Heart left ventricle (tissue), 16 donors: ENCODE measurements at regions of chr5 and their contacts with region 1.

Region 1: GRCh38 chr5:14727428-14727865 is 62.9 kb downstream of the OTULIN start:
- DNase-seq: peak; percentile 79 to 90 (median 79)
- ATAC-seq: peak; percentile 60 to 78 (median 68)
- H3K4me3 ChIP-seq: no peak overlapping the region
- H3K27ac ChIP-seq: peak overlapping the region in 6 of 12 donors; percentile 8 to 65 (median 34)
- H3K4me1 ChIP-seq: peaks cover 0 to 41% (median 25%) of the 10 kb centered on the region in 12 donors
- H3K27me3 ChIP-seq: no peaks in the 10 kb centered on the region
- CTCF ChIP-seq: peak; percentile 90 to 99 (median 96)
- POLR2A ChIP-seq: no peak

Region 2: DNA sequence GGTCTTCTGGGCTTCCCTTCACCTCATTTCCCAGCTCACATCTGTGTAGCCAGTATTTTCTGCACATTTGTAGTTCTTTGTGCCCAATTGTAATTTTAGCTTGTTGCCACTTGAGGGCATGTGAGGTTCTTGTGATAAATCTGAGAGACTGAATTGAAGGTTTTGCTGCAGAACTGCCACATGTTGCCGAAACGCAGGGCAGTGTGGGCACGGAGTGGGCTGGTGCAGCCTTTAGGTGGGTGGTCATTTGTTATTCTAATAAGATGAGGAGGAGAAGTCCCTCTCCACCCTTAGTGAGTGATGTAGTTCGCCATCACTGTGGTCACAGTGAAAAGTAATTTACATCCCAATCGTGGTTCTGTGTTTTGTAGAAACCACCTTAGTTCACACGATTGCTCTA is 41.7 kb before region 1 on chr5:
- intact Hi-C with region 1: loop called in 2 of 10 experiments (anchors 5 kb)
- DNase-seq: no peak
- ATAC-seq: peak; percentile 11 to 54 (median 43)
- H3K4me3 ChIP-seq: no peak overlapping the region
- H3K27ac ChIP-seq: peak overlapping the region in 10 of 12 donors; percentile 30 to 87 (median 75)
- H3K4me1 ChIP-seq: peaks cover 0 to 59% (median 23%) of the 10 kb centered on the region in 12 donors
- H3K27me3 ChIP-seq: no peaks in the 10 kb centered on the region
- CTCF ChIP-seq: peak; percentile 31 to 75 (median 58)
- POLR2A ChIP-seq: no peak

Region 3: GRCh38 chr5:14794583-14795230 is 67.3 kb after region 1 on chr5:
- intact Hi-C with region 1: no loop called
- DNase-seq: no peak
- ATAC-seq: peak in 2 of 4 donors; percentile 9 to 42
- H3K4me3 ChIP-seq: no peak overlapping the region
- H3K27ac ChIP-seq: no peak overlapping the region
- H3K4me1 ChIP-seq: peaks cover 0 to 35% (median 14%) of the 10 kb centered on the region in 12 donors
- H3K27me3 ChIP-seq: no peaks in the 10 kb centered on the region
- CTCF ChIP-seq: no peak
- POLR2A ChIP-seq: no peak

Region 4: GRCh38 chr5:14809369-14810155 is 82.1 kb after region 1 on chr5:
- intact Hi-C with region 1: loop called in 1 of 10 experiments (anchors 5 kb)
- DNase-seq: peak in 4 of 5 donors; percentile 57 to 78 (median 68)
- ATAC-seq: peak; percentile 25 to 80 (median 74)
- H3K4me3 ChIP-seq: peak overlapping the region in 3 of 12 donors; percentile 6 to 27 (median 12)
- H3K27ac ChIP-seq: peak overlapping the region in 11 of 12 donors; percentile 31 to 85 (median 60)
- H3K4me1 ChIP-seq: peaks cover 15 to 63% (median 42%) of the 10 kb centered on the region in 12 donors
- H3K27me3 ChIP-seq: no peaks in the 10 kb centered on the region
- CTCF ChIP-seq: no peak
- POLR2A ChIP-seq: no peak

Region 5: DNA sequence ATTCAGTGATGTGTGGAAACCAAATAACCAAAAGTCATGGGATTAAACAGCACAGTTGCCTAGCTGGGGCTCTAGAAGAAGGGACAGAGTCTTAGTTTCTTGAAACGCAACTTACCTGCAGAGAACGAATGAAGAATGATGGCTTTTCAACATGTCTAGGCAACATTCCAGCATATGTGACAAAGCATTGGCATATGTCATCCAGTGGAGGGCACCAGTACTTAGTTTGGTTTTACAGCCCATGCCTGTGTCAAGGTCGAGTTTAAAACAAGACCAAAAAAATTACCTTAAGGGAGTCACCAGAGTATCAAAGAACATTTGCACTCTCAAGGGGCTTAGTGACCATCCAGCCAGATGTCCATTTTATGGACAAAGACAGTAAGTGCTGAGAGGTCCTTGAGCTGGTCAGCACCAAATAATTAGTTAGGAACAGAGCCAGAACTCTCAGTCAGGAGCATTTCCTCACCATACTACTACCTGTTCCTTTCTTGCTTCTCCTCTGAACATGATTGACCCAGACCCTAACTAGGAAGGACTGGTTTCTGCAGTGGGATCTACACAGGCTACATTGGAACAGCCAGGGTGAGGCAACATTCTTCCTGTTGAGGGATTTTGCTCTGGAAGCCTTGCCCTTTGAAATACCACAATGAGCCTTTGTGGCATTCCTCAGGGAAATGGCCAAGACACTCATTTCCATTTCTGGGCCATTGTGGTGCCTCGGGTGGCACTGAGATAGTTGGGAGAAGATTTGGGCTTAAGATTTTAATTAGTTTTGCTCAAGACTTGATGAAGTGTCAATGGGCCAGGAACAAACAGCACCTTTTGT is 219.6 kb after region 1 on chr5:
- intact Hi-C with region 1: loop called in 2 of 10 experiments (anchors 1 to 5 kb)
- DNase-seq: no peak
- ATAC-seq: peak; percentile 49 to 74 (median 62)
- H3K4me3 ChIP-seq: no peak overlapping the region
- H3K27ac ChIP-seq: no peak overlapping the region
- H3K4me1 ChIP-seq: peaks cover 0 to 10% (median 6%) of the 10 kb centered on the region in 12 donors
- H3K27me3 ChIP-seq: no peaks in the 10 kb centered on the region
- CTCF ChIP-seq: peak; percentile 14 to 59 (median 38)
- POLR2A ChIP-seq: no peak

Region 6: DNA sequence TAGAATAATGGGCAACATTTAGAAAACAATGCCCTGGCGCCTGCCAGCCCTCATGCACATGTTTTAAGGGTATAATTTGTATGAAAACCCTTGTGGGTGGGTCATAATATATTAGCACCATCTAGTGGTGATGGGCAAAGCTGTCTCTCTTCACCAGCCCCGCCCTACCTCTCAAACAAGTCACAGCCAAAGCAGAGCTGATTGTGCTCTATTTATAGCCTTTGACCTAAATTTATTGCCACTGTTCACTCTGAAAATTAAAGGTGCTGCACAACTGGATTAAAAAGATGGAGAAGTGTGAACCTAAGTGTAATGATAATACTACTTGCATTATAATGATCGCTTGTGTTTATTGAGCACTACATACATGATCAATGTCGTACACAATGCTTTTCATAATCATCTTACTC is 276.1 kb after region 1 on chr5:
- intact Hi-C with region 1: loop called (anchors 1 to 5 kb)
- DNase-seq: peak in 4 of 5 donors; percentile 65 to 71 (median 68)
- ATAC-seq: peak; percentile 72 to 89 (median 87)
- H3K4me3 ChIP-seq: no peak overlapping the region
- H3K27ac ChIP-seq: no peak overlapping the region
- H3K4me1 ChIP-seq: peaks cover 4 to 46% (median 34%) of the 10 kb centered on the region in 12 donors
- H3K27me3 ChIP-seq: no peaks in the 10 kb centered on the region
- CTCF ChIP-seq: peak; percentile 76 to 93 (median 86)
- POLR2A ChIP-seq: no peak

Region 7: GRCh38 chr5:15499528-15500324 is 772.3 kb after region 1 on chr5 and contains the start of gene FBXL7:
- intact Hi-C with region 1: no loop called
- DNase-seq: peak; percentile 88 to 92 (median 89)
- ATAC-seq: peak; percentile 90 to 93 (median 91)
- H3K4me3 ChIP-seq: peak within 1 kb of the TSS; percentile 69 to 93 (median 81)
- H3K27ac ChIP-seq: peak within 1 kb of the TSS; percentile 83 to 96 (median 90)
- H3K4me1 ChIP-seq: peaks cover 3 to 38% (median 18%) of the 10 kb centered on the region in 12 donors
- H3K27me3 ChIP-seq: peaks cover 0 to 14% (median 0%) of the 10 kb centered on the region in 9 donors
- CTCF ChIP-seq: peak in 9 of 12 donors; percentile 9 to 55 (median 37)
- POLR2A ChIP-seq: peak in 1 of 2 donors; percentile 57
- total RNA-seq, gene FBXL7: 17.6 to 27.6 (median 24.5) TPM